ENCODE measurements at regions of chr13 and their contacts with region 1.

Region 1: DNA sequence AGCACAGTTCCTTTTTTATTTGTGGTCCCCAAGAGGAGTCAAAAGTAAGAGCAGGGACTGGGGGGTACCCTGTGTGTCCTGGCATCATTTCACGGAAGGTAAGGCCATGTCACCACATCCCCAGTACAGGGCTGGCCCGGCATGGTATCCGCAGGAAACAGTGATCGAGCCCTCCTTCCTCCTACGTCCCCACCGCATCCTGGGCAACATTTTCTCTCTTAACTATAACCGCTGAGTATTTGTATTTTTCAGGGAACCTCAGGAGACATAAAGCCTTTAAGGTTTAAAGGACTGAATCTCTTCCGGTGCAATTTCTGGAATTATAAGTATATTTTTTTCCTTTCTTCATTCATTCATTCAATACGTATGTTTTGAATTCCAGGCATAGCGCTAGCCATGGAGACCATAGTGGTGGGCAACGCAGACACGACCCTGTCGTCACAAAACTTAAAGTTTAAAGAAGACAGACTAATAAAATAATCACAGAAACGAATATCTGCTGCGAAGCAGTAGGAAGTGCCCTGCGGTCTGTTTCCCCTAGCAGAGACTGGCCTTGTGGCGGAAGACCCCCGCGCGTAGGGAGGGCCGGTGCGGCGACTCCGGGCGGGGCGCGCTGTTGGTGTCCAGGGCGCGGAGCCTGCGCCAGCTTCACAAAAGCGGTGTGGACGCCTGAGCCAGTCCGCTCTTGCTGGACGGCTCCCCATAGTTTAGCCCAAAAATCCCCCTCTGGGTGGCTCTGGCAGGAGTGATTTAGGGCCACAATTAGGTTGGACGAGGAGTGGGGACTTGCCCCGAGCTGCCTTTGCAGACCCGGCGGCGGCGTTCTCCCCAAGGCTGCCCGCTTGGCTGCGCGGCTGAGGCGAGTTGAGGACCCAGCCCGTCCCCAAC is 13.9 kb upstream of the LATS2 start:
- DNase-seq: no peak
- ATAC-seq: peak; percentile 54
- H3K4me3 ChIP-seq: peak overlapping the region; percentile 69
- H3K27ac ChIP-seq: no peak overlapping the region
- H3K4me1 ChIP-seq: peaks cover 22% of the 10 kb centered on the region
- H3K27me3 ChIP-seq: no peaks in the 10 kb centered on the region
- CTCF ChIP-seq: no peak

Region 2: DNA sequence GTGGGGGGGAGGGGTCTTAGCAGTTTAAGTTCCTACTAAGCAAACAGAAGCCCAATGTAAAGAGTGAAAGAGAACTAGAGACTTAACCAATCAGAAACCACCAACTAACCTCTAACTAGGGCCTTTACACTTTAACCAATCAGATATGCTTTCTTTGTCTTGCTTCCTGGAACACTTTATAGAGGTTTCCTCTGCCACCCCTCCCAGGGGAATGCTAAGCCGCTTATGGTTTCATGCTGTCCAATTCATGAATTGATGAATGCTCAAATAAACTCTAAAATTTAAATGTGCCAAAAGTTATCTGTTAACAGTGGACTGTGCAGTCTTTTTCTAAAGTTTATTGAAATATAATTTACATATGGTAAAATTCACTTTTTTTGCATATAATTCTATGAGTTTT is 20.1 kb after region 1 on chr13:
- CTCF ChIA-PET with region 1: no interaction called
- POLR2A ChIA-PET with region 1: no interaction called
- intact Hi-C with region 1: no loop called
- DNase-seq: no peak
- ATAC-seq: no peak
- H3K4me3 ChIP-seq: no peak overlapping the region
- H3K27ac ChIP-seq: no peak overlapping the region
- H3K4me1 ChIP-seq: no peaks in the 10 kb centered on the region
- H3K27me3 ChIP-seq: no peaks in the 10 kb centered on the region
- CTCF ChIP-seq: no peak

Region 3: GRCh38 chr13:21152251-21152899 is 77.1 kb after region 1 on chr13:
- CTCF ChIA-PET with region 1: interaction called, 11 read pairs
- POLR2A ChIA-PET with region 1: no interaction called
- intact Hi-C with region 1: no loop called
- DNase-seq: no peak
- ATAC-seq: no peak
- H3K4me3 ChIP-seq: no peak overlapping the region
- H3K27ac ChIP-seq: no peak overlapping the region
- H3K4me1 ChIP-seq: no peaks in the 10 kb centered on the region
- H3K27me3 ChIP-seq: no peaks in the 10 kb centered on the region
- CTCF ChIP-seq: no peak